Activated CD4-positive, alpha-beta T cell treated with anti-CD3 and anti-CD28 coated beads for 36 hours (primary cell): ENCODE measurements at regions of chr4 and their contacts with region 1.

Region 1: DNA sequence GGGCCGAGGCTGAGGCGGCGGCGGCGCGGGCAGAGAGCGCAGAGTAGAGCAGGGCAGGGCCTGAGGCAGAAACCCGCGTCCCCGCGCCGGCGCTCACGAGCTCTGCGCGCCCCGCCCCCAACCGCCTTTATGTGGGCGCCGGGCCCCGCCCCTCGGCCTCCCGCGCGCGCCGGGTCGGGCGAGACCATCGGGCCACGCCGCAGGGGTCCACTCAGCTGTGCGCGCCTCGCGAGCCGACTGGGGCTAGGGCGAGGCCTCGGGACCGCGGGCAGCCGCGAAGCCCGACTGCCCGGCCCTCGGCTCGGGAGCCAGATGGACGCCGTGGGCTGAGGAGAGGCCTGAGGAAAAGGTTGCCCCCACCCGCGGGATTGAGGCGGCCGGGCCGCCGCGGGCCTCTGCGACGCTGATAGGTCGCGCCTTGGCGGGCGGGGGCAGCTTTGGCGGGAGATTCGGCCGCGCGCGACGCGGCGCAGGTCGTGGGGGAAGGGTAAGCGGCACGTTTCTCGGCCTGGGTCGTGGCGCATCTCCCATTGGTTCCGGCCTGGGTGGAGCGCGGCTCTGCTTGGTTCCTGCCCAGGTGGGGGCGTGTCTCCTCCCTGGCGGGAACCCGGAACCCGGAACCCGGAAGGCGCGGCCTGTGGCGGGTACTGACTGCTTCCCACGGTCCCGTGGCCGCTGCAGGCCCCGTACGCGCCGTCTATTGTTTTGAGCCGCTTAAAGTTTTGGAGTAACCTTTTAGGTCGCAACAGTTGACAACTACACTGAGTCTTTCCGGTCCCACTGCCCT is at the start of gene SLBP:
- DNase-seq: peak; percentile 100
- ATAC-seq: peak; percentile 89
- H3K4me3 Mint-ChIP-seq: peak within 1 kb of the TSS; percentile 99
- H3K27ac Mint-ChIP-seq: peak within 1 kb of the TSS; percentile 98
- H3K4me1 Mint-ChIP-seq: peaks cover 58% of the 10 kb centered on the region
- H3K27me3 Mint-ChIP-seq: no peaks in the 10 kb centered on the region
- total RNA-seq, gene SLBP: 113 to 134 TPM

Region 2: DNA sequence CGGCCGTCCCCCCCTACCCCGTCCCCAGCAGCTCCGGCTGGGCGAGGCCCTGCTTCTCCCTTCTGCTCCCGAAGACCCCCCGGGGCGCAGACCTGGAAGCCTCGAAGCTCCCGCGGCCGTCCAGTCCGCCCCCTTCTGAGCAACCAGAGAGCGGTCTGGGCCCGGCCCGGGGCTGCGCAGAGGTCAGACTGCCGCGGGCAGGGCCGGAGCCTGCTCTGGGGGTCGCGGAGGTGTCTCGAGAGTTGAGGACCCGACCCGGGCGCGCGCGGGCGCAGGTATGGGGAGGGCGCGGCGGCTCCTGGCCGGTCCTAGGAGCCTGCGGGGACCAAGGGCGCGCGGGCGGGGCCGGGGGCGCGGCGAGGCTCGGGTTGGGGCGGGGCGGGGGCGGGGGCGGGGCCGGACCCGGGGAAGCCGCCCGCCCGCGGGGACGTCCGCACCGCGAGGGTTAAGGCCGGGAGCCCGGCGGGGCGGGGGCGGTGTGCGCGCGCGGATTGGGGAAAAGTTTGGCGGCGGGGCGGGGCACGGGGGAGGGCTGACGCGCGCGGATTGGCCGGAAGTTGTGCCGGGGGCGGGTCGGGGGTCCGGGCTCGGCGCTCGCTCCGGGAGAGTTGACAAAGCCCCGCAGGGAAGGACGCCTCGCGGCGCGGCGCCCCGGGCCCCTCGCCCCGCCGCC is 701.3 kb before region 1 on chr4 and contains the start of gene FGFRL1:
- CTCF ChIA-PET with region 1: no interaction called
- POLR2A ChIA-PET with region 1: no interaction called
- intact Hi-C with region 1: loop called in 1 of 2 experiments (anchors 2 kb)
- DNase-seq: peak; percentile 97
- ATAC-seq: peak; percentile 59
- H3K4me3 Mint-ChIP-seq: peak within 1 kb of the TSS; percentile 75
- H3K27ac Mint-ChIP-seq: peak within 1 kb of the TSS; percentile 80
- H3K4me1 Mint-ChIP-seq: peaks cover 9% of the 10 kb centered on the region
- H3K27me3 Mint-ChIP-seq: peaks cover 26% of the 10 kb centered on the region
- total RNA-seq, gene FGFRL1: 17.6 to 23.5 TPM

Region 3: DNA sequence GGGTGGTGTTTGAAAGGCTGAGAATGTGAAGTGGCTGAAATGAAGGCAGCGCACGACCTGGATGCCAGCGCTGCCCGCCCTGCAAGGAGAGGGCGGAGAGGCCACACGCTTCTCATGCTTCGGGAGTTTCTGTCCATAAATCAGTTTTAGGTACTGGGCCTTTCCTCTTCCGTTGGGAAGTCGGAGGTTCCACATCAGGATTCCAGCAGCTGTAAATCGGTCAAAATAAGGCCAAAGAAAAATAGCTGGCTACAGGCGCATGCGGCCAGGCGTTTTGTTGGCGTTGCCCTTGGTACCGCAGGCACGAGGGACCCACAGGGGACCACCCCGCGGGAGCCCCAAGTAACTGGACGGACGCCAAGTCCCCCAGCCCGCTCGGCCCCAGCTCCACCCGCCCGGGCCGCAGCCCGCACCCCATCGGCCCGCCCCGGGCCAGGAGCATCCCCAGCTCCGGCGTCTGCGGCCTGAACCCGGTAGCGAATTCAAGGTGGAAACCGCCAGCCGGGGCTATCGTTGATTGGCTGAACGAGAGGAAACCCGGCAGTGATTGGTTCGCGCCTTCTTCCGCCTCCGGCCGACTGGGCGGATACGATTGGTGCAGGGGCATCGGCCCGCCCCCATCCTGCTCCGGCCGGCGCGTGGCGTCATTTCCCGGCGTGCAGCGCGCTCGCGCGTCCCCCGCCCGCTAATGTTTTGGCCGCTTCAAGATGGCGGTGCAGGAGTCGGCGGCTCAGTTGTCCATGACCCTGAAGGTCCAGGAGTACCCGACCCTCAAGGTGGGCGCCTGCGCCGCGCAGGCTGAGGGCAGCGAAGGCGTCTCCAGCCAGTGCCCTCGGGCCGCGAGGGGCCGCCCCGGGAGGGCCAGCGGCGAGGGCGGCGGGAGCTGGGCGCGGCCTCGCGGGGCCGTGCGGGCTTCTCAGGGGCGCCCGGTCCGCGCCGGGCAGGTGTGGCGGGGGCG is 422.9 kb before region 1 on chr4 and contains the start of gene MAEA:
- CTCF ChIA-PET with region 1: no interaction called
- POLR2A ChIA-PET with region 1: no interaction called
- intact Hi-C with region 1: loop called in 1 of 2 experiments (anchors 1 kb)
- DNase-seq: peak; percentile 99
- ATAC-seq: peak; percentile 98
- H3K4me3 Mint-ChIP-seq: peak within 1 kb of the TSS; percentile 95
- H3K27ac Mint-ChIP-seq: peak within 1 kb of the TSS; percentile 87
- H3K4me1 Mint-ChIP-seq: peaks cover 41% of the 10 kb centered on the region
- H3K27me3 Mint-ChIP-seq: no peaks in the 10 kb centered on the region
- total RNA-seq, gene MAEA: 38.9 to 40.4 TPM

Region 4: GRCh38 chr4:1693129-1693896 is 19.1 kb before region 1 on chr4:
- CTCF ChIA-PET with region 1: interaction called, 122 read pairs
- POLR2A ChIA-PET with region 1: interaction called, 28 read pairs
- intact Hi-C with region 1: loop called (anchors 1 to 2 kb)
- DNase-seq: peak; percentile 88
- ATAC-seq: peak; percentile 96
- H3K4me3 Mint-ChIP-seq: no peak overlapping the region
- H3K27ac Mint-ChIP-seq: peak overlapping the region; percentile 70
- H3K4me1 Mint-ChIP-seq: peaks cover 4% of the 10 kb centered on the region
- H3K27me3 Mint-ChIP-seq: no peaks in the 10 kb centered on the region

Region 5: DNA sequence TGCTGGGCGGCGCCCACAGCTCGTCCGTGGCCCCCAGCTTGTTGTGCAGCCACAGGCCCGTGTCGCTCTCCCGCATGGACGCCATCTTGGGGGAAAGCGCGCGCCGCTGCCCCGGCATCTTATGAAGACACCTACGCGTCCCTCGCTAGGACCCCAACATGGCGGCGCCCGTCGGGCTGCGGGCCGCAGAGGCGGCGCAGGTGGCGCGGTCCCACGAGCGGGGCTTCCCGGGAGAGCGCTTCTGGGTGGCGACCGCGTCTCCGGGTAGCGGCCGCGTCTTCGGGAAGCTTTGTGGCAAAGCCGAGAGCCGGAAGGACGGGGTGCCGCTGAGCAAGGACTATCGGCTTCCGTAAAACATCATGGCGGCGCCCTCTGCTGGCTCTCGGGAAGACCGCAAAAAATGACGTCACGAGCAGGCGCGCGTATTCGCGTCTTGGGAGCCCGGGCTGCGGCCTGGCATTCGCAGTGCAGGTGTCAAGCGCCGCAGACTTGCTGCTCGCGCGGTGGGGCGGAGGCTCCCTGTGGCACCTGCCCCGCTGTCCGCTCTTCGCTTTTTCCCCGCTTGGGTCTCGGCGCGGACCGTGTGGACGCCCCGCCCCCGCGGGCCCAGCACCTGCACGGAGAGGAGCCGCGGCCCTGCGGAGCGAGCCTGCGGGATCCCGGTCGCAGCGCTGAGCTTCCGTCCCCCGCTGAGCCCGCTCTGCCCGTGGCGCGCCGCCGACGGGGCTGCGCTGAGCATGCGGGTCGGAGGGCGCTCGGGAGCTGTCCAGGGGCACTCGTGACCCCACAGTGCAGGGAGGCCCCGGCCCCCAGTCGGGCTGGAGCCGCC is 296.7 kb after region 1 on chr4 and contains the start of gene NELFA:
- CTCF ChIA-PET with region 1: no interaction called
- POLR2A ChIA-PET with region 1: no interaction called
- intact Hi-C with region 1: loop called in 1 of 2 experiments (anchors 1 kb)
- DNase-seq: peak; percentile 97
- ATAC-seq: peak; percentile 81
- H3K4me3 Mint-ChIP-seq: peak within 1 kb of the TSS; percentile 87
- H3K27ac Mint-ChIP-seq: peak within 1 kb of the TSS; percentile 90
- H3K4me1 Mint-ChIP-seq: peaks cover 34% of the 10 kb centered on the region
- H3K27me3 Mint-ChIP-seq: no peaks in the 10 kb centered on the region
- total RNA-seq, gene NELFA: 41.6 to 48.3 TPM

Region 6: DNA sequence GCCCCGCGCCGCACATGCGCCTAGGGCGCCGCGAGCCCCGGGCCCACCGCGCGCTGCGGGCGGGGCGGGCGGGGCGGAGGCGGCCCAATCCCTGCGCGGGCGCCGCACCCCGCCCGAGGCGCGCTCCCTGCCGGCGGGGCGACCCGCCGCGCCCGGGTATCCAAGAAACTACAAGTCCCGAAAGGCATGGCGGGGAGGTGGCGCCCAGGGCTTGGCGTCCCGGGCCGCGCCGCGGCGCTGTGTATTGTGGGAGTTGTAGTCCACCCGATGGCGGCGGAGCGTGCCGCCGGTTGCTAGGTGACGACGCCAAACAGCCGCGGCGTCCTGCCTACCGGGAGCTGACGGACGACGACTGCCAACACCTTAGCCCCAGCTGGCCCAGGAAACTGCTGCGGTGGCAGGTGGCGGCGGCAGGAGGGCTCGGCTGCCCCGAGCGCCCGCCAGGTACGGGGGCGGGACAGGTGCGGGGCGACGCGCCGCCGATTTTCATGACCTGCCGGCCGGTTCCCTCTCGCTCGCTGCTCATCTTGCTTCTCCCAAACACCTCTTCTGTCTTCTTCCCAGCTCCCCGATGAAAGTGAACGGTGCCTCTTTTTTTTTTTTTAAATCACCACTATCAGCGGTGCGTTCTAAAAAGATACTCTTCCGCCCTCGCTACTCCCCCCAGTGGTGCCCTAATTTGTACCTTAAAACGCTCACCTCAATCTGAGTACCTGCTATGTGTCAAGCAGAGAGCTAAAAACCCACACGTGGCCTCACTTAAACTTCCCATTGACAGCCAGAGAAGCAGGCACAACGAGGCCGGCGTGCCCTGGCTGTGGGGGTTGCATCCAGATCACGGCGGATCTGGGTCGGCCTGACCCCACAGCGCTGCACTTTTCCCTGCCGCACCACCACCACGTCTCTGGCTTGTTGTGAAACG is 706.5 kb after region 1 on chr4 and contains the start of gene CFAP99:
- CTCF ChIA-PET with region 1: no interaction called
- POLR2A ChIA-PET with region 1: no interaction called
- intact Hi-C with region 1: loop called in 1 of 2 experiments (anchors 2 kb)
- DNase-seq: peak; percentile 99
- ATAC-seq: peak; percentile 93
- H3K4me3 Mint-ChIP-seq: peak within 1 kb of the TSS; percentile 82
- H3K27ac Mint-ChIP-seq: peak within 1 kb of the TSS; percentile 68
- H3K4me1 Mint-ChIP-seq: peaks cover 39% of the 10 kb centered on the region
- H3K27me3 Mint-ChIP-seq: peaks cover 27% of the 10 kb centered on the region
- total RNA-seq, gene CFAP99: 0.05 TPM in 1 of 2 experiments, not detected in the other